K562 (cell line): ENCODE measurements at regions of chr3 and their contacts with region 1.

Region 1: GRCh38 chr3:60555684-60556354 is 695.4 kb downstream of the FHIT start:
- DNase-seq: no peak
- ATAC-seq: no peak
- H3K4me3 ChIP-seq: no peak overlapping the region
- H3K27ac ChIP-seq: no peak overlapping the region
- H3K4me1 ChIP-seq: no peaks in the 10 kb centered on the region; a peak in 1 of 5 replicates
- H3K27me3 ChIP-seq: no peaks in the 10 kb centered on the region
- CTCF ChIP-seq: no peak
- EP300 ChIP-seq: no peak
- POLR2A ChIP-seq: no peak
- RAD21 ChIP-seq: no peak

Region 2: DNA sequence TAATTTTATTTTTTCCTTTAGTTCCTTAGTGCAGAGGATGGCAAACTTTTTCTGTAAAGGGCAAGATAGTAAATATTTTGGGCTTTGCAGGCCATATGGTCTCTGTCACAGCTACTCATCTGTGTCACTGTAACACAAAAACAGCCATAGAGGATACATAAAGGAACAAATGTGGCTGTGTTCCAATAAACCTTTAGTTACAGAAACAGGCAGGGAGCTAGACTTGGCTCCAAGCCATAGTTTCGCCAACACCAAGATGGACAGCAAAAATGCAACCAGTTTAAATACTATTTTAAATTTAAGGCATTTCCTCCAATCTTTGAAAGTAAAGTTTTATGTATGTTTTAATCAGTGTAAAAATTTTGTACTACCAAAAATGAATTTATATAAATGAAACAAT is 57.9 kb before region 1 on chr3:
- CTCF ChIA-PET with region 1: no interaction called
- POLR2A ChIA-PET with region 1: interaction called, 4 read pairs
- in situ Hi-C with region 1: no loop called
- intact Hi-C with region 1: loop called (anchors 1 kb)
- DNase-seq: no peak
- ATAC-seq: no peak
- H3K4me3 ChIP-seq: no peak overlapping the region
- H3K27ac ChIP-seq: no peak overlapping the region
- H3K4me1 ChIP-seq: no peaks in the 10 kb centered on the region
- H3K27me3 ChIP-seq: no peaks in the 10 kb centered on the region
- CTCF ChIP-seq: no peak
- EP300 ChIP-seq: no peak
- POLR2A ChIP-seq: no peak
- RAD21 ChIP-seq: no peak

Region 3: DNA sequence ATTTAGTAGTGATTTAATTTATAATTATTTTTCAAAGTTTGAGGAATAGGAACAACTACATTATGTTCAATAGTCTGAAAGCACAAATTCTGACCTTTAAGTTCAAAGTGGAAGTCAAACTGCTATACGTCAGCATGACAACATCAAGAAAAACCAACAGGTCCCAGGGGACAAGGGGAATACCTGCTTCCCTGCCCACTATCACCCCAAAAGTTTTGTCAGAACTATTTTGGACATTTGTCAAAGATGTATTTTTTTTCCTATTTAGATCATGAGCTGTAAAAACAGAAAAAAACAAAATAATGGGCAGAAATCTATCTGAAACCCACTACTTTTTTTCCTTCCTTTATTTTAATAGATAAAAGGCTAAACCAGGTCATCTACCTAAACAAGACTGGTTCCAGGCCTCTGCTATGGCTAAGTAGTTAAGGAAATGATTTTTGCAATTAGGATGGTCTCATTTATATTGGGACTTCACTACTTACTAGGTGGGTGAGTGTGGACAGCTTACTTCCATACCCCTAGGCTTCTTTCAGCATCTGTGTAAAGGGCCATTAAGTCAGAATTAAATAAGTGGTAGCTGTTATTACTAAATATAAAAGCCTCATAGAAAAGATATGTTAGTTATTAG is 50.9 kb before region 1 on chr3:
- CTCF ChIA-PET with region 1: no interaction called
- POLR2A ChIA-PET with region 1: no interaction called
- in situ Hi-C with region 1: loop called (anchors 5 kb)
- intact Hi-C with region 1: no loop called
- DNase-seq: no peak
- ATAC-seq: no peak
- H3K4me3 ChIP-seq: no peak overlapping the region
- H3K27ac ChIP-seq: no peak overlapping the region
- H3K4me1 ChIP-seq: no peaks in the 10 kb centered on the region
- H3K27me3 ChIP-seq: no peaks in the 10 kb centered on the region
- CTCF ChIP-seq: no peak
- EP300 ChIP-seq: no peak
- POLR2A ChIP-seq: no peak
- RAD21 ChIP-seq: no peak

Region 4: GRCh38 chr3:60669636-60670035 is 113.8 kb after region 1 on chr3:
- CTCF ChIA-PET with region 1: no interaction called
- POLR2A ChIA-PET with region 1: no interaction called
- in situ Hi-C with region 1: no loop called
- intact Hi-C with region 1: no loop called
- DNase-seq: no peak
- ATAC-seq: no peak
- H3K4me3 ChIP-seq: no peak overlapping the region
- H3K27ac ChIP-seq: no peak overlapping the region
- H3K4me1 ChIP-seq: no peaks in the 10 kb centered on the region
- H3K27me3 ChIP-seq: no peaks in the 10 kb centered on the region
- CTCF ChIP-seq: no peak
- EP300 ChIP-seq: no peak
- POLR2A ChIP-seq: no peak
- RAD21 ChIP-seq: no peak